Right ventricle myocardium inferior (tissue), 1 donor: ENCODE measurements at regions of chr5 and their contacts with region 1.

Region 1: DNA sequence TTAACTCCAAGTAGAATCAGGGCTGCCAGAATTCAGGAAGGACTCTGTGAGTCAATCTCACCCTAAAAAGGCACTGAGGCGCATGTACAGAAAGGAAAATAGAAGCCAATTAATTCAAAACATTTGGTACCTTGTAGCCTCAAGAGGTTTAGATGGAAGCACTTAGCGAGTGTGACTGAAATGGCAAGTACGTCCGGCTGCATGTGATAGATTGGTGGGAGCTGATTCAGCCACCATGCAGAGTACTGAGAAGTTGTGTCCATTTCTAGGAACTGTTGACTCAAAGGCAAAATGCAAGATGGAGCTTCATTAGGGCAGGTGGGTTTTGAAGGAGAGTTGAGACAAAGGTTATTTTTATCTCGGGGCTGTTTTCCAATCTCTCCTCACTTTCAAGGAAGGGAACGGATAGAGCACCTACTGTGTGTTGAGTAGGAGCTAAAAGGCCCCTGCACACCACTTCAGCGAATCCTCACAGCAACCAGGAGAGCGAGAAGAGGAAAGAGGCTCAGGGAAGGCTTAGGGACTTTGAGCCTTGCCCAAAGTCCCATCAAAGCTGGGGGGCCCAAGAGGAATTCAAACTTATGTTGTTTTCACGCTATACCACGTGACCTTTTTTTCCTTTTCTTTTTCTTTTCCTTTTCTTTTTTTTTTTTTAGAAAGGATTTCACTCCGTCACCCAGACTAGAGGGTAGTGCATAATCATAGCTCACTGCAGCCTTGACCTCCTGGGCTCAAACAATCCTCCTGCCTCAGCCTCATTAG is 34.6 kb upstream of the CPEB4 start:
- DNase-seq: no peak
- ATAC-seq: peak; percentile 82

Region 2: DNA sequence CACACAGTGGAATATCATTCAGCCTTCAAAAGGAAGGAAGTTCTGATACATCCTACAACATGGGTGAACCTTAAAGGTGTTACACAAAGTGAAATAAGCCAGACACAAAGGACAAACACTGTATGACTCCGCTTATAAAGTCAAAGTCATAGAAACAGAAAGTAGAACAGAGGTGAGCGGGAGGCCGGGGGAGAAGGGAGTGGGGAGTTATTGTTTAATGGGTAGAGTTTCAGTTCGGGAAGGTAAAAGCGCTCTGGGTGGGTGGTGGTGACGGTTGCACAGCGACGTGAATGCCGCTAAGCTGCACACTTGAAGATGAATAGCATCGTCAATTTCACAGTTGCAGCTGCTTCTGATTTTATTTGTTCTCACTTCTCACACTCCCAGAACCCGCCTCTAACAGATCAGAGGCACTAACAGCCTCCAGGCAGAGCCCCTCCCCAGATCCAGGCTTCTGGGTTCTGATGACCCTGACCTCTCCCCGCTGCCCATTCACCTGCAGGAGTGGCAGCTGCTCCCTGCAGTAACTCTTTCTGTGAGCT is 675.1 kb before region 1 on chr5:
- intact Hi-C with region 1: no loop called
- DNase-seq: no peak
- ATAC-seq: no peak

Region 3: GRCh38 chr5:173721256-173722232 is 132.0 kb before region 1 on chr5:
- intact Hi-C with region 1: no loop called
- DNase-seq: no peak
- ATAC-seq: no peak

Region 4: GRCh38 chr5:173775261-173776129 is 78.1 kb before region 1 on chr5:
- intact Hi-C with region 1: loop called (anchors 2 kb)
- DNase-seq: no peak
- ATAC-seq: no peak